ENCODE measurements at regions of chr1 and their contacts with region 1.

Region 1: GRCh38 chr1:201223852-201224665 is 33.4 kb downstream of the IGFN1 start:
- DNase-seq: no peak
- ATAC-seq: no peak
- H3K4me3 ChIP-seq: no peak overlapping the region
- H3K4me3 Mint-ChIP-seq: no peak overlapping the region
- H3K27ac ChIP-seq: no peak overlapping the region
- H3K27ac Mint-ChIP-seq: no peak overlapping the region
- H3K4me1 ChIP-seq: no peaks in the 10 kb centered on the region
- H3K4me1 Mint-ChIP-seq: peaks cover 0 to 1% (median 0%) of the 10 kb centered on the region in 7 donors
- H3K27me3 ChIP-seq: no peaks in the 10 kb centered on the region
- H3K27me3 Mint-ChIP-seq: peaks cover 0 to 10% (median 4%) of the 10 kb centered on the region in 5 donors

Region 2: GRCh38 chr1:200448034-200448762 is 775.9 kb before region 1 on chr1:
- CTCF ChIA-PET with region 1: no interaction called
- POLR2A ChIA-PET with region 1: no interaction called
- intact Hi-C with region 1: no loop called
- DNase-seq: no peak
- ATAC-seq: no peak
- H3K4me3 ChIP-seq: no peak overlapping the region
- H3K4me3 Mint-ChIP-seq: peak overlapping the region in 1 of 10 donors; percentile 18
- H3K27ac ChIP-seq: no peak overlapping the region
- H3K27ac Mint-ChIP-seq: peak overlapping the region in 1 of 9 donors; percentile 79
- H3K4me1 ChIP-seq: no peaks in the 10 kb centered on the region
- H3K4me1 Mint-ChIP-seq: peaks cover 0 to 12% (median 0%) of the 10 kb centered on the region in 7 donors
- H3K27me3 ChIP-seq: no peaks in the 10 kb centered on the region
- H3K27me3 Mint-ChIP-seq: no peaks in the 10 kb centered on the region

Region 3: GRCh38 chr1:200780545-200781369 is 443.3 kb before region 1 on chr1:
- CTCF ChIA-PET with region 1: no interaction called
- POLR2A ChIA-PET with region 1: no interaction called
- intact Hi-C with region 1: no loop called
- DNase-seq: no peak
- ATAC-seq: no peak
- H3K4me3 ChIP-seq: no peak overlapping the region
- H3K4me3 Mint-ChIP-seq: peak overlapping the region in 3 of 10 donors; percentile 26 to 47 (median 28)
- H3K27ac ChIP-seq: no peak overlapping the region
- H3K27ac Mint-ChIP-seq: peak overlapping the region in 2 of 9 donors; percentile 23 to 46
- H3K4me1 ChIP-seq: no peaks in the 10 kb centered on the region
- H3K4me1 Mint-ChIP-seq: peaks cover 0 to 14% (median 4%) of the 10 kb centered on the region in 7 donors
- H3K27me3 ChIP-seq: no peaks in the 10 kb centered on the region
- H3K27me3 Mint-ChIP-seq: no peaks in the 10 kb centered on the region

Region 4: DNA sequence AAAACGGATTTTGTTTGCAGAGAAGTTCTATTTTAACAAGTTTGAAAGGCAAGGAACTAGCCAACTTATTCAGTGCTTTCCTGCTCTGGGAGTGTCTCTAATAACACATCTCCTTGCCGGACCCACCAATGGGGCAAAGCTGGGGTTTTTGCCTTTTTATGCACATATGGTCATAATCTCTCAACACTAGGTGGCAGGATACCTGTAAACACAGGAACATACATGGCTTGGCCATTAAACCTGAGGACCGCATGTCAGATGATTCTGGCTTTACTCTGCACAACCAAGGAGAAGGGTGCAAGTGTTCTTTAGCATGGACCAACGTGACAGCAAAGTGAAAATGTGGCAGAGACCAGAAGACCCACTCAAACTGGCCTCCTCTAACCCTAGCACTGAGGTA is 74.7 kb before region 1 on chr1:
- CTCF ChIA-PET with region 1: interaction called, 3 read pairs
- POLR2A ChIA-PET with region 1: no interaction called
- intact Hi-C with region 1: loop called in 1 of 2 experiments (anchors 1 kb)
- DNase-seq: peak in 2 of 9 donors; percentile 5
- ATAC-seq: no peak
- H3K4me3 ChIP-seq: no peak overlapping the region
- H3K4me3 Mint-ChIP-seq: peak overlapping the region in 1 of 10 donors; percentile 1
- H3K27ac ChIP-seq: no peak overlapping the region
- H3K27ac Mint-ChIP-seq: no peak overlapping the region
- H3K4me1 ChIP-seq: peaks cover 7 to 8% of the 10 kb centered on the region in 2 donors
- H3K4me1 Mint-ChIP-seq: peaks cover 7 to 27% (median 16%) of the 10 kb centered on the region in 7 donors
- H3K27me3 ChIP-seq: no peaks in the 10 kb centered on the region
- H3K27me3 Mint-ChIP-seq: peaks cover 0 to 1% (median 0%) of the 10 kb centered on the region in 5 donors

Measured in naive thymus-derived CD4-positive, alpha-beta T cell (primary cell).